ENCODE measurements at regions of chr2 and their contacts with region 1.

Region 1: DNA sequence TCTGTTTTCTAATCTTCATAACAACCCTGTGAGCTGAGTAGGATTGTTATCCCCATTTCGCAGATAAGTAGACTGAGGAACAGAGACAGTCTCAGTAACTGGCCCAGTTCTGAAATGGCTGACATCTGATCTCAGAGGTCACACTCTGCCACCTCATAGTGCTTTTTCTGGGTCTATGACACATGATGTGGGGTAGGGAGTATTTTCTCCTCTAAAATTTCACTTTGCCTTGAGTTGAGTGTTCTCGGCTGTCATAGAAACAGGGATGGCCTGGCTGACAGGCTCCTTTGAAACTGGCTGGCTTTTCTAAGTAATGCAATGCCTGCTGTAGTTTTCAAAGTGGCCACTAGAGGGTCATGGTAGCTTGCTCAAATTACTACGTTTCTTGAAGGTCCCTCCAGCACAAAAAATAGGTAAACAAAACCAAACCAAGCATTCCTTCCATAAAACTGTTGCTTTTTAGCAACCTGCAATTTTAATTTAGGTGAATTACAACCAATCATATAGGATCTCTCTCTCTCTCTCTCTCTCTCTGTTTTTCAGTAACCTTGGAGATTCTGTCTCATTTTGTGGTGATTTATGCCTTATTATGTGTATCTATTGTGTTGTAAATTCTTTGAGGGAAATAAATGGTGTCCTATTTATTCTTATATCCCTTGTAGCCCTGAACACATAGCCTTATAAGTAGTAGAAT is 84.2 kb upstream of the TTN start:
- DNase-seq: peak; percentile 76
- H3K4me3 Mint-ChIP-seq: no peak overlapping the region
- H3K27ac Mint-ChIP-seq: no peak overlapping the region
- H3K4me1 Mint-ChIP-seq: no peaks in the 10 kb centered on the region
- H3K27me3 Mint-ChIP-seq: no peaks in the 10 kb centered on the region
- CTCF ChIP-seq: peak; percentile 80

Region 2: DNA sequence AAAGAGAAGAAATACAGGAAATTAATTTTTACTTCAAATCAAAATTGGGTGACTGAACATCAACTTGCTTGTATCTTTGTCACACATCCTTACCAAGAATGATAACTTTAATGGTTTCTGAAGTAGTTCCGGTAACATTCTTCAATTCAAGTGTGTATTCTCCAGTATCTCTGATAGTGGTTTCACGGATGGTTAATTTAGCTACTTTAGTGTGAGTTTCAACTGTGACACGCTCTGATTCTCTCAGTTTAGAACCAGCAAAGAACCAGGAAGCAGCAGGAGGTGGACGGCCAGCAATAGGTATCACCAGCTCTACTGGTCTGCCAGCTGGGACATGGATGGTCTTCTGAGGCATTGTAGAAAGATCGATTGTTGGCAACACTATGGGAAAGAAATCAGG is 348.8 kb before region 1 on chr2:
- CTCF ChIA-PET with region 1: no interaction called
- POLR2A ChIA-PET with region 1: no interaction called
- intact Hi-C with region 1: no loop called
- DNase-seq: no peak
- H3K4me3 Mint-ChIP-seq: no peak overlapping the region
- H3K27ac Mint-ChIP-seq: no peak overlapping the region
- H3K4me1 Mint-ChIP-seq: no peaks in the 10 kb centered on the region
- H3K27me3 Mint-ChIP-seq: no peaks in the 10 kb centered on the region
- CTCF ChIP-seq: no peak

Region 3: GRCh38 chr2:178874529-178875240 is 16.7 kb before region 1 on chr2:
- CTCF ChIA-PET with region 1: interaction called, 28 read pairs
- POLR2A ChIA-PET with region 1: interaction called, 3 read pairs
- intact Hi-C with region 1: no loop called
- DNase-seq: peak; percentile 38
- H3K4me3 Mint-ChIP-seq: no peak overlapping the region
- H3K27ac Mint-ChIP-seq: no peak overlapping the region
- H3K4me1 Mint-ChIP-seq: peaks cover 11% of the 10 kb centered on the region
- H3K27me3 Mint-ChIP-seq: no peaks in the 10 kb centered on the region
- CTCF ChIP-seq: no peak

Region 4: DNA sequence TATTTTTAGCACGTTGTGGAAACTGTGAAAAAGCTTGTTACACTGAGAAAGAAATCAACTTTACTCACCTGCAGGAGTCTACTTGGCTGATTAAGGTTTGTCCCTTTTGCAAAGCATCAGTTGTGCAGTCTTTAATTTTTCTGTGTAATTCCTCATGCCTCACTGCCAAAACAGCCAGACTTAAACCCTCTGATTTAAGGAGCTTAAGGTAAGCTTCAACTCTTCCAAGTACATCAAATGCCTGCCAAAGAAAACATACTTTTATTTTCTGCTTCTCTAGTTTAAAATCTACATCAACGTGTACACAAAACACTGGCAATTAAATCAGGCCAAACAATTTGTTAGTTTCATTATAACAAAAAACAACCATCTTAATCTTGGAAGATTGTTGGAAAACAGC is 13.8 kb after region 1 on chr2:
- CTCF ChIA-PET with region 1: interaction called, 18 read pairs
- POLR2A ChIA-PET with region 1: no interaction called
- intact Hi-C with region 1: no loop called
- DNase-seq: no peak
- H3K4me3 Mint-ChIP-seq: no peak overlapping the region
- H3K27ac Mint-ChIP-seq: no peak overlapping the region
- H3K4me1 Mint-ChIP-seq: peaks cover 8% of the 10 kb centered on the region
- H3K27me3 Mint-ChIP-seq: no peaks in the 10 kb centered on the region
- CTCF ChIP-seq: no peak

Region 5: DNA sequence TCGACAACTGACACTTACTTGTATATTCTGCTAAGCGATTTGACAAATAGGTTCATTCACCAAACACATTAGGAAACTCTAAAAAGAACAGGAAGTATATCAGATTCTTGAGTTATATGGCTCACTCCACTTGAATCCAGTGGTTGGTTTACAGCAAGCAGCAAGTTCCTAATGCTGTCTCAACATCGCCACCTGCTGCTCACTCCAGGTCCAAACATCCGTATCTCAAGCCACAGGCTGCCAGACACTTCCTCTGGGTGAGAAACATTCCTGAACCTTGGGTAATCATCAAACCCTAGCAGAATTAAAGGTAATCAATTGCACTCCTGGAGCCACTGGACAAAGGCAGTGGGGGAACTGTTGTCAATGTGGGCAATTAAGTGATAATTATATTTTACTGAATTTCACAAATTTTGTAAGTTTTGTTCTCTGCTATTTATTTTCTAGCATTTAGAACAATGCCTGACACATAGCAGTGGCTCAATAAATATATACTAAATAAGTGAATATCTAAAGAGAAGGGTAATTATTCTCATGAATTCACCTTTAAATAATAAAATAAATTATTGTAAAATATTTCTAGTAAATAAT is 22.9 kb after region 1 on chr2:
- CTCF ChIA-PET with region 1: interaction called, 15 read pairs
- POLR2A ChIA-PET with region 1: interaction called, 4 read pairs
- intact Hi-C with region 1: loop called (anchors 1 kb)
- DNase-seq: peak; percentile 85
- H3K4me3 Mint-ChIP-seq: no peak overlapping the region
- H3K27ac Mint-ChIP-seq: no peak overlapping the region
- H3K4me1 Mint-ChIP-seq: peaks cover 16% of the 10 kb centered on the region
- H3K27me3 Mint-ChIP-seq: no peaks in the 10 kb centered on the region
- CTCF ChIP-seq: peak; percentile 70

Region 6: DNA sequence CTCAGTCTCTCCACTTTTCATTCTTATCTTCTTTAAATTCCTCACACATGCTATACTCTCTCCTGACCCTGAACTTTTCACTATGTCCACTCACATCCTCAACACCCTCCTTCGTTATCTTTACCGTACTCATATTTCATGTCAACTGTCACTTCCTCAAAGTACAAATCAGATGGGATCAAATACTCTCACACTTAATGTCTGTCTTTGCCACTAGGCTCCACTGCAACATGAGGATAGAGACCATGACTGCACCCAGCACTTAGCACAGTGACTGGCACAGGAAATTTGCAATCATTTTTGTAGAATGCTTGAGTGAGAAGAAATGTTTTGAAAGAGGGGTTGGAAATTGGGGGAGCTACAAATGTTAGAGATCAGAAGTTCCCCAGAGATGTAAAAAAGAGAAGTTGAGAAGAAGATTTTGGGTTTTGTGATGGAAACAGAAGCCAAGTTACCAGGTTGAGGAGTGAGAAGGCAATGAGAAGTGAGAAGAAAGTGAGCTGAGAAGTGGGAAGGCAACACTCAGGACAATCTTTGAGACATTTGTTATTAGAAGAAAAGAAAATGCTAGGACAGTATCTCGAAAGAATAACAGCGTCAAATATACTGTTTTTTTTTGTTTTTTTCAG is 71.5 kb after region 1 on chr2:
- CTCF ChIA-PET with region 1: interaction called, 10 read pairs
- POLR2A ChIA-PET with region 1: no interaction called
- intact Hi-C with region 1: no loop called
- DNase-seq: no peak
- H3K4me3 Mint-ChIP-seq: no peak overlapping the region
- H3K27ac Mint-ChIP-seq: no peak overlapping the region
- H3K4me1 Mint-ChIP-seq: no peaks in the 10 kb centered on the region
- H3K27me3 Mint-ChIP-seq: no peaks in the 10 kb centered on the region
- CTCF ChIP-seq: no peak

Region 7: DNA sequence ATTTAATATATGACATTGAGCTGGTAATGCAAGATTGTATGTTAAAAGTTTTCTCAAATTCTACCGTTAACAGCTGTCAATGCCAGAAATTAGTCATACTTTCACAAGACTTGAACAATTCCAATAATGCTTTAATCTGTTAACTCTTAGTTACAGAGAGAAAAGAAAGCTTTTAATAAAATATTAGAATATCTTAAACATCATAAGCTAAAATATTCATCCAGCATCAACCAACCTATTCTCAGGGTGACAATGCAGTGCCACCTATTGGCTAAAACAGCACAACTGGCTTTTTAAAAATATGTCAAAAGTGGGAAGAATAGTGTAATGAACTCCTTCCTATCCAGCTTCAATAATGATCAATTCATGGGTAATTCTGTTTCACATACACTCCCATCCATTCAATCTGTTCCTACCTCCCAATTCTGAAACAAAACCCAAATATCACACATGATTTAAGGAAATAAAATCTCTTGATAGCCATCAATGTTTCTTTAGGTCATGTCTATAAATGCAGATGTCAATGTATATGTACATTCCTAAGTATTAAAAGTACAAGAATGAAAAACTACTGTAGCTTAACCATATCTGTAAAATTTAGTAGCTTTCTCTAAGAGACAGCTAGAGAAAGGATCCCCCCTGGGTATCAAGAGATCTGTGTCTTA is 238.3 kb after region 1 on chr2:
- CTCF ChIA-PET with region 1: interaction called, 26 read pairs
- POLR2A ChIA-PET with region 1: no interaction called
- intact Hi-C with region 1: loop called (anchors 1 kb)
- DNase-seq: peak; percentile 29
- H3K4me3 Mint-ChIP-seq: no peak overlapping the region
- H3K27ac Mint-ChIP-seq: no peak overlapping the region
- H3K4me1 Mint-ChIP-seq: no peaks in the 10 kb centered on the region
- H3K27me3 Mint-ChIP-seq: no peaks in the 10 kb centered on the region
- CTCF ChIP-seq: peak; percentile 43

Measured in MCF 10A (cell line).